Naive thymus-derived CD4-positive, alpha-beta T cell (primary cell): ENCODE measurements at regions of chr9 and their contacts with region 1.

Region 1: GRCh38 chr9:37592108-37592951 is at the start of gene TOMM5:
- DNase-seq: peak; percentile 80 to 92 (median 90)
- ATAC-seq: peak; percentile 99
- H3K4me3 ChIP-seq: peak within 1 kb of the TSS; percentile 95
- H3K4me3 Mint-ChIP-seq: peak within 1 kb of the TSS; percentile 93 to 100 (median 98)
- H3K27ac ChIP-seq: peak within 1 kb of the TSS; percentile 88
- H3K27ac Mint-ChIP-seq: peak within 1 kb of the TSS; percentile 93 to 98 (median 96)
- H3K4me1 ChIP-seq: peaks cover 6 to 12% of the 10 kb centered on the region in 2 donors
- H3K4me1 Mint-ChIP-seq: peaks cover 8 to 51% (median 44%) of the 10 kb centered on the region in 7 donors
- H3K27me3 ChIP-seq: no peaks in the 10 kb centered on the region
- H3K27me3 Mint-ChIP-seq: peaks cover 0 to 22% (median 9%) of the 10 kb centered on the region in 5 donors
- total RNA-seq, gene TOMM5: 33.6 to 86.8 (median 44.7) TPM

Region 2: GRCh38 chr9:37036776-37037502 is 555.4 kb before region 1 on chr9:
- CTCF ChIA-PET with region 1: no interaction called
- POLR2A ChIA-PET with region 1: no interaction called
- intact Hi-C with region 1: loop called in 1 of 2 experiments (anchors 10 kb)
- DNase-seq: peak in 8 of 9 donors; percentile 31 to 55 (median 47)
- ATAC-seq: peak; percentile 74
- H3K4me3 ChIP-seq: peak overlapping the region; percentile 49
- H3K4me3 Mint-ChIP-seq: peak overlapping the region; percentile 76 to 98 (median 88)
- H3K27ac ChIP-seq: no peak overlapping the region
- H3K27ac Mint-ChIP-seq: peak overlapping the region in 5 of 9 donors; percentile 6 to 75 (median 30)
- H3K4me1 ChIP-seq: peaks cover 16 to 34% of the 10 kb centered on the region in 2 donors
- H3K4me1 Mint-ChIP-seq: peaks cover 21 to 50% (median 36%) of the 10 kb centered on the region in 7 donors
- H3K27me3 ChIP-seq: peaks cover 25 to 62% of the 10 kb centered on the region in 2 donors
- H3K27me3 Mint-ChIP-seq: peaks cover 78 to 94% (median 84%) of the 10 kb centered on the region in 5 donors

Region 3: DNA sequence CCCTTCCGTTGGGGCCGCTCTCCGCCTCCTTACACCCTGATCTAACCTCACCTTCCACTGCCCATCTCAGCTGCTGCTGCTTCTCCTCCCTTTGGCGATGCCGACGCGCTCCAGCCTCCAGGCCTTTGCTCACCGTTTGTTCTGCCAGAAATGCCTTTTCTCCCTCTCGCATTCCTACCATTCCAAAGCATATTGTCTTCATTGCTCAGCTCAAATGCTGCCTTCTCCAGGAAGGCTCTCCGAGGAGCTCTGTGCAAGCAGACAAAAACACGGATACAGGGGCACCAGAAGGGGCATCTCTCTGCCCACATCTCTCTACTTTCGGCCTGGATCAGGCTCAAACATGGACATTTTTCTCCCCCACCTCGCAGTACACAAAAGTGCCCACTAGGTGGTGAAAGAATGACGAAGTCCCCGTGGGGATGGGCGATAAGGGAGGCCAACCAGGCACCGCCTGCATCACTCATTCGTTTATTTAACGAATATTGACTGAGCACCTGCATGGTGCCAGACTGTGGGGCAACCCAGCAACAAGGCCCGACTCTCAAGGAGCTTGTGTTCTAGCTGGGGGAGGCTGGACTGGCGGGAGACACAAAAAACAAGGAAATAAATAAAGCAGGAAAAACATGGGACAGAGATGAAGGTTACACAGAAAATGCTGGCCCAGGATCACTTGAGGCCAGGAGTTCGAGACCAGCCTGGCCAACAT is 177.2 kb before region 1 on chr9:
- CTCF ChIA-PET with region 1: no interaction called
- POLR2A ChIA-PET with region 1: interaction called, 3 read pairs
- intact Hi-C with region 1: loop called (anchors 1 to 5 kb)
- DNase-seq: peak; percentile 55 to 77 (median 70)
- ATAC-seq: peak; percentile 94
- H3K4me3 ChIP-seq: no peak overlapping the region
- H3K4me3 Mint-ChIP-seq: peak overlapping the region in 7 of 10 donors; percentile 27 to 72 (median 49)
- H3K27ac ChIP-seq: no peak overlapping the region
- H3K27ac Mint-ChIP-seq: peak overlapping the region in 4 of 9 donors; percentile 76 to 92 (median 84)
- H3K4me1 ChIP-seq: no peaks in the 10 kb centered on the region
- H3K4me1 Mint-ChIP-seq: peaks cover 5 to 11% (median 7%) of the 10 kb centered on the region in 7 donors
- H3K27me3 ChIP-seq: no peaks in the 10 kb centered on the region
- H3K27me3 Mint-ChIP-seq: peaks cover 0 to 7% (median 5%) of the 10 kb centered on the region in 5 donors

Region 4: DNA sequence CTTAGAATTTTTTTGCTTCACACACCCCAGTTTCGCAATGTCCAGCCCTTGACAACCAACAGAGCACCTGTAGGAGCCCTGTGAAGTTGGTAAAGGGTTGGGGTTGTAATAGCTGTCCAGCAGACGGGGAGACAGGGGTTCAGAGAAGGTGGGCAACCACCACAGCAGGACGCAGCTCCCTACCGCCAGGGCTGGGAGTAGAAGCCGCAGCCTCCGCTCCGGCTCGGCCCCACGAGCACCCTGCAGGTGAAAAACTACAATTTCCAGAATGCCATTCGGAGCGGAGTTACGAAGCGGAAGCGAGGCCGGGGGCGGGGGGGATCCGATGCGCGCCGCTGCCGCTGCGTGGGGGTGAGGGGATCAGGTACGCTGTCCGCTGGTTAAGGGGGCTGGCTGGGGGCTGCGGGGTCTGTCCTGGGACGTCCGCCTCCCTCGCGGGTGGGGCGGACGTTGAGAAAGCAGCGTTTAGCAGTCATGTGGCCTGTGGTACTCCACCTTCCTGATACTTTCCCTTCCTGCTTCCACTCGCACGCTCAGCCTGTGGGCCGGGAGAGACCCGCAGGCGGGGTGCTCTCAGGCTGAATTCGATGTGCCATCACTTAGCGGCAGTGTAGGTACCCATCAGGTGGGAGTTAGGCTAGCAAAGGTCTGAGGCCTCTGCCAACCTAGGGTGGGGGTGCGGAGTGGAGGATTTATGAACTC is 161.3 kb after region 1 on chr9 and contains the start of gene TRMT10B:
- CTCF ChIA-PET with region 1: no interaction called
- POLR2A ChIA-PET with region 1: no interaction called
- intact Hi-C with region 1: loop called (anchors 1 to 5 kb)
- DNase-seq: peak; percentile 50 to 78 (median 70)
- ATAC-seq: peak; percentile 95
- H3K4me3 ChIP-seq: peak within 1 kb of the TSS; percentile 92
- H3K4me3 Mint-ChIP-seq: peak within 1 kb of the TSS; percentile 87 to 98 (median 96)
- H3K27ac ChIP-seq: peak within 1 kb of the TSS; percentile 87
- H3K27ac Mint-ChIP-seq: peak within 1 kb of the TSS; percentile 68 to 95 (median 92)
- H3K4me1 ChIP-seq: peaks cover 9 to 11% of the 10 kb centered on the region in 2 donors
- H3K4me1 Mint-ChIP-seq: peaks cover 26 to 52% (median 33%) of the 10 kb centered on the region in 7 donors
- H3K27me3 ChIP-seq: no peaks in the 10 kb centered on the region
- H3K27me3 Mint-ChIP-seq: no peaks in the 10 kb centered on the region
- total RNA-seq, gene TRMT10B: 16.0 to 28.9 (median 18.5) TPM

Region 5: GRCh38 chr9:37903647-37904444 is 311.5 kb after region 1 on chr9 and contains the start of gene SLC25A51:
- CTCF ChIA-PET with region 1: no interaction called
- POLR2A ChIA-PET with region 1: no interaction called
- intact Hi-C with region 1: loop called in 1 of 2 experiments (anchors 2 kb)
- DNase-seq: peak; percentile 89 to 99 (median 95)
- ATAC-seq: peak; percentile 93
- H3K4me3 ChIP-seq: peak within 1 kb of the TSS; percentile 69
- H3K4me3 Mint-ChIP-seq: peak within 1 kb of the TSS; percentile 88 to 96 (median 90)
- H3K27ac ChIP-seq: peak within 1 kb of the TSS; percentile 71
- H3K27ac Mint-ChIP-seq: peak within 1 kb of the TSS; percentile 90 to 97 (median 94)
- H3K4me1 ChIP-seq: peaks cover 20 to 22% of the 10 kb centered on the region in 2 donors
- H3K4me1 Mint-ChIP-seq: peaks cover 16 to 41% (median 30%) of the 10 kb centered on the region in 7 donors
- H3K27me3 ChIP-seq: no peaks in the 10 kb centered on the region
- H3K27me3 Mint-ChIP-seq: peaks cover 0 to 4% (median 0%) of the 10 kb centered on the region in 5 donors
- total RNA-seq, gene SLC25A51: 20.2 to 37.8 (median 30.2) TPM